IMR-90 (cell line): ENCODE measurements at regions of chr1 and their contacts with region 1.

Region 1: DNA sequence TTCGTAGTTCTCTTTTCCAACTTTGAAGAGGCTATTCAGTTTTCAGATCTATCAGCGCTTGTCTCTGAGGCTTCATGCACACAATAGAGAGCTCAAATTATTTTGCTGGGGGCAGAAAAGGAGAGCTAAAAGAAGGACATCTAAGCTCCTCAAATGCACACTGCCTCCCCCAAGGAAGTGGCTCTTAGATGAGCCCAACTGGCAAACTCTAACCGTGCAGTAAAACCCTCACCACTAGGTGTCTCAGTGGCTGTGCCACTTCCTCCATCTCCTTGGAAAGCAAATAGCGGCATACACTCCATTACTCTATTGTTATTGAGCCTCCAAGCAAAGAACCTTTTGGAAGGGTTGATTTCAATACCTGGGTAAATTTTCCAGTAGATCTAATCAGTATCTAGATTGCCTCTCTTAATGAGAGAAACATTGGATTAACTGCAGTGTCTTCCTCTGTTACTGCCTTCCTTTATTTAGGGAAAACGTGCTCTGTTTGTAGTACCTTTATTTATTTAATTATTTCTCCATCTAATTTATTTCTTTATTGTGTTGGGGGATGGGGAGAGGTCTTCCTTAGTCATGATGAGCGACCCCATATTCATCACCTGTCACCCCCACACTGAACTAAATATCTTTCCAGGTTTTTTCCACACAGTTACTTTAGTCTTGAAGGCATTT is 9.2 kb upstream of the SFPQ start:
- DNase-seq: peak; percentile 82
- ATAC-seq: peak; percentile 100
- H3K4me3 ChIP-seq: no peak overlapping the region
- H3K27ac ChIP-seq: no peak overlapping the region
- H3K4me1 ChIP-seq: no peaks in the 10 kb centered on the region; the same call in 1 of the 2 replicates
- H3K27me3 ChIP-seq: no peaks in the 10 kb centered on the region
- CTCF ChIP-seq: peak; percentile 87
- POLR2A ChIP-seq: 0 out of 2 replicates have a peak, but pooled peaks have one; percentile 28
- RAD21 ChIP-seq: peak; percentile 81

Region 2: GRCh38 chr1:35298464-35298863 is 96.3 kb after region 1 on chr1:
- CTCF ChIA-PET with region 1: interaction called, 3 read pairs
- POLR2A ChIA-PET with region 1: no interaction called
- dilution Hi-C with region 1: no loop called
- in situ Hi-C with region 1: loop called (anchors 10 kb)
- intact Hi-C with region 1: loop called (anchors 1 kb)
- DNase-seq: peak; percentile 36
- ATAC-seq: peak; percentile 79
- H3K4me3 ChIP-seq: no peak overlapping the region
- H3K27ac ChIP-seq: no peak overlapping the region
- H3K4me1 ChIP-seq: no peaks in the 10 kb centered on the region
- H3K27me3 ChIP-seq: no peaks in the 10 kb centered on the region
- CTCF ChIP-seq: peak; percentile 60
- POLR2A ChIP-seq: no peak
- RAD21 ChIP-seq: peak; percentile 63

Region 3: GRCh38 chr1:35369922-35370671 is 167.9 kb after region 1 on chr1:
- CTCF ChIA-PET with region 1: interaction called, 3 read pairs
- POLR2A ChIA-PET with region 1: no interaction called
- dilution Hi-C with region 1: no loop called
- in situ Hi-C with region 1: no loop called
- intact Hi-C with region 1: loop called (anchors 5 kb)
- DNase-seq: peak; percentile 90
- ATAC-seq: peak; percentile 82
- H3K4me3 ChIP-seq: no peak overlapping the region
- H3K27ac ChIP-seq: peak overlapping the region; percentile 66; the same call in 1 of the 2 replicates
- H3K4me1 ChIP-seq: peaks cover 4% of the 10 kb centered on the region
- H3K27me3 ChIP-seq: no peaks in the 10 kb centered on the region
- CTCF ChIP-seq: no peak
- POLR2A ChIP-seq: no peak
- RAD21 ChIP-seq: no peak

Region 4: DNA sequence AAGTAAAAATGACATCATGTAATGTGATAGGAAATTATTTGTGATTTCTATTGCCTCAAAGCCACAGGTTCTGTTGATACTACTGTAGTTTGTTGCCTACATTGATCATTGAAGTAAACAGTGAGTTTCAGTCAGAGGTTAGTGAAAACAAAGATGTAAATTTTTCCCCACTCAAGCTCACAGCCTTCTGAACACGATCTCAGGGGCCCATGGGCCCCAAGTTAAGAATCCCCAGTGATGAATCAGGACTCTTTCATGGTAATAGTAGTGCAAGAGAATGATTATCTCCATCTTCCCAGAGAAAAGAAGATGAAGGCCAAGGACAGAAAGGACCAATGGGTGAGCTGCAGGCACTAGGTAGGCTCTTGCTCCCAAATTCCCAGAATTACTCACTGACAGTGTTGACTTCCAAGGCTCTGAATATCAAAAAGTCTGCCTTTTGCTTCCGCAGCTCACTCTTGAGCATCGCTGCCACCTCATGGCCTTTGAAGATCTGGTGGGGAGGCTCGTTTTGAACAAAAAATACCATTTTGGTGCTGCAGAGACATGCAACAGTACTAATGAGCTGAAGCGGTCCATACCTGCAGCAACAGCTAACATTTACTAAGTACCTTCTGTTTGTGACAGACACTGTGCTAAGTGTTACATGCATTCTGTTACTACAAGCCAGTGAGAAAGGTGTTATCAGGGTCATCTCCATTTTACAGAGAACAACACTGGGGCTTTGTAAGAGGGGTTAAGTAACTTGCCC is 241.8 kb after region 1 on chr1:
- CTCF ChIA-PET with region 1: interaction called, 3 read pairs
- POLR2A ChIA-PET with region 1: no interaction called
- dilution Hi-C with region 1: no loop called
- in situ Hi-C with region 1: no loop called
- intact Hi-C with region 1: loop called (anchors 2 kb)
- DNase-seq: peak; percentile 35
- ATAC-seq: peak; percentile 4; the same call in 1 of the 2 replicates
- H3K4me3 ChIP-seq: no peak overlapping the region
- H3K27ac ChIP-seq: no peak overlapping the region
- H3K4me1 ChIP-seq: peaks cover 6% of the 10 kb centered on the region
- H3K27me3 ChIP-seq: no peaks in the 10 kb centered on the region
- CTCF ChIP-seq: peak; percentile 22
- POLR2A ChIP-seq: no peak
- RAD21 ChIP-seq: peak; percentile 30; the same call in 1 of the 2 replicates

Region 5: DNA sequence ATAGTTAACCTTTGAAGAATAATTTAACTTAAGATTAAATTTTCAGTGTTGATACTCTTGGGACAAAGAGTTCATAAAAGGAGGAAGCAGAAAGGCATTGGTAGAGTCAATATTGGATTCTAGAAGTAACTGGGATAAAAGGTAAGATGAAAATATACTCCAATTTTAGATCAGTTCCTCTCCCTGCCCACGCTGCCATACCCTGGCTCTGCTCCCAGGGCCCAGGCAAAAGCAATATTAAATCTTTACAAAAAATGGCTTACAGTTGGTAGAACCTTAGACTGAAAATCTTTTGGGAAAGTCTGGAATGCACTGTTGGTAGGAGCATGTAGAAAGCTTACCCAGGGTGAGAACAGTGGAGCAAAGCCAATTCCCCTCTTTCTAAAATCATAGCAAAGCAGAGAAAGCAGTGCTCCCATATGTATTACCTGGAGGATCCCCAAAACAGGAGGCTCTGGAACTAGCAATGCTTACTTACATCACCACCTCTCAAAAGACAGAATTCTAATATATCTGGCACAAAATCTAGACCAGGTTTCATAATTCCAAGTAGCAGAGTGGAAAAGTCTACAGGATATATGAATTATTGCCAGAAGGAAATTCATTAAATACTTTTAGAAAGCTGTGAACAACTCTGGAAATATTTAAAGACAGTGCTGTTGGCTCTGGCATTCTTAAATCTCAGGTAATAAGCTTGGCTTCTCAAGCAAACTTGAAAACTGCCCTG is 330.5 kb after region 1 on chr1:
- CTCF ChIA-PET with region 1: no interaction called
- POLR2A ChIA-PET with region 1: no interaction called
- dilution Hi-C with region 1: no loop called
- in situ Hi-C with region 1: no loop called
- intact Hi-C with region 1: no loop called
- DNase-seq: no peak
- ATAC-seq: no peak
- H3K4me3 ChIP-seq: no peak overlapping the region
- H3K27ac ChIP-seq: no peak overlapping the region
- H3K4me1 ChIP-seq: peaks cover 4% of the 10 kb centered on the region; the same call in 1 of the 2 replicates
- H3K27me3 ChIP-seq: no peaks in the 10 kb centered on the region
- CTCF ChIP-seq: no peak
- POLR2A ChIP-seq: no peak
- RAD21 ChIP-seq: no peak

Region 6: GRCh38 chr1:35726450-35727433 is 524.6 kb after region 1 on chr1:
- CTCF ChIA-PET with region 1: no interaction called
- POLR2A ChIA-PET with region 1: no interaction called
- dilution Hi-C with region 1: no loop called
- in situ Hi-C with region 1: no loop called
- intact Hi-C with region 1: loop called (anchors 2 kb)
- DNase-seq: peak; percentile 58
- ATAC-seq: peak; percentile 97
- H3K4me3 ChIP-seq: no peak overlapping the region
- H3K27ac ChIP-seq: no peak overlapping the region
- H3K4me1 ChIP-seq: no peaks in the 10 kb centered on the region
- H3K27me3 ChIP-seq: no peaks in the 10 kb centered on the region
- CTCF ChIP-seq: peak; percentile 85
- POLR2A ChIP-seq: no peak
- RAD21 ChIP-seq: peak; percentile 87

Region 7: GRCh38 chr1:35769759-35770446 is 567.7 kb after region 1 on chr1 and contains the start of gene CLSPN:
- CTCF ChIA-PET with region 1: no interaction called
- POLR2A ChIA-PET with region 1: no interaction called
- dilution Hi-C with region 1: no loop called
- in situ Hi-C with region 1: no loop called
- intact Hi-C with region 1: loop called (anchors 5 kb)
- DNase-seq: peak; percentile 94
- ATAC-seq: peak; percentile 97
- H3K4me3 ChIP-seq: peak within 1 kb of the TSS; percentile 82
- H3K27ac ChIP-seq: peak within 1 kb of the TSS; percentile 88
- H3K4me1 ChIP-seq: peaks cover 2% of the 10 kb centered on the region
- H3K27me3 ChIP-seq: no peaks in the 10 kb centered on the region
- CTCF ChIP-seq: no peak
- POLR2A ChIP-seq: peak; percentile 81; the same call in 1 of the 2 replicates
- RAD21 ChIP-seq: no peak
- total RNA-seq, gene CLSPN: 14.3 and 14.4 TPM in 2 replicates

Region 8: DNA sequence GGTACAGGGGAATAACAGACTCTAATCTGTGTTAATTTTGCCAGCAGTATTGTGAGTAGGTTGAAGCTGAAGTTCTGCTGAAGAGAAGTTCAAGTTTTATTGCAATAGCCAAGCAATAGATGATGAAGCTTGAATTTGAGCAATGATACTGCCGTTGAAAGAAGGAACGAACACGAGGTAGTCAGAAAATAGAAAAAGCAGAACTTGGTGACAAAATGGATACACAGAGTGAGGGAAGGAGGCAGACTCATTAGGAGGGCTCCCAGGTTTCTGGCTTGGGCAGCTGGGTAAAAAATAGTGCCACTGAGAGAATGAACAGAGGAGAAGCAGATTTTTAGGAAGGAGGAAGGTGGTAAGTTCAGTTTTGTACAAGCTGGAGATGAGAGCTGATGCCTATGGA is 658.5 kb after region 1 on chr1:
- CTCF ChIA-PET with region 1: no interaction called
- POLR2A ChIA-PET with region 1: interaction called, 10 read pairs
- dilution Hi-C with region 1: no loop called
- in situ Hi-C with region 1: no loop called
- intact Hi-C with region 1: no loop called
- DNase-seq: no peak
- ATAC-seq: no peak
- H3K4me3 ChIP-seq: no peak overlapping the region
- H3K27ac ChIP-seq: no peak overlapping the region
- H3K4me1 ChIP-seq: no peaks in the 10 kb centered on the region
- H3K27me3 ChIP-seq: no peaks in the 10 kb centered on the region
- CTCF ChIP-seq: no peak
- POLR2A ChIP-seq: no peak
- RAD21 ChIP-seq: no peak